ENCODE measurements at regions of chr22 and their contacts with region 1.

Region 1: DNA sequence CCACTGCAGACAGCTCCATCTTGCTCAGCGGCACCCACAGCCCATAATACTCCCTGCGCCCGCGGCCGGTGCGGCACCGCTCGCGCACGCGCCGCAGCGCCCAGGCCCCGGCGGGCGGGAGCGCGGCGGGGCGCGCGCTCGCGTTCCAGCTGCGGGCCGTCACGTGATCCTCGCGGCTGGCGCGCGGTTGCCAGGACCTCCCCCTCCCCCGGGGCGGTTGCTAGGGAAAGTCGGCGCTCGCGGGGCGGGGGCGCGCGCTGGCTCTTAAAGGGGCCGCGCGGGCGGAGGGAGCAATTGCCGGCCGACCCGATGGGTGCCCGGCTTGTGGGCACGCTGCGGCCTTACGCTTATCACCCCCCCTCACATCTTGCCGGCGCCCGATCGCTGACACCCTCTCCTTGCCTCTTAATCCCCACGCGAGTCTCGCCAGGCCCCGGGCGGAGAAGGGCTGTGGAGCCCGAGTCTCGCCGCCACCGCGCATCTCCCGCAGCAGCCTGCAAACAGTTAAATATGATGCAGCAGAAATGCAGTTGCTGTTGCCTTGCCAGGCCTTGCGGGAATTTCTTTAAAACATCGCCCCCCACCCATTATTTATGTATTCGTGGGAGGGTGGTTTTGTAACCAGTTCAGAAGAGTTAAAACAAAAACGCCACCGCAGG is at the start of gene CBX6:
- DNase-seq: peak; percentile 73 to 97
- H3K4me3 ChIP-seq: peak within 1 kb of the TSS; percentile 83
- H3K27ac ChIP-seq: peak within 1 kb of the TSS; percentile 62
- H3K4me1 ChIP-seq: peaks cover 28% of the 10 kb centered on the region
- H3K27me3 ChIP-seq: no peaks in the 10 kb centered on the region
- CTCF ChIP-seq: no peak
- total RNA-seq, gene CBX6: 131 and 136 TPM in 2 replicates

Region 2: DNA sequence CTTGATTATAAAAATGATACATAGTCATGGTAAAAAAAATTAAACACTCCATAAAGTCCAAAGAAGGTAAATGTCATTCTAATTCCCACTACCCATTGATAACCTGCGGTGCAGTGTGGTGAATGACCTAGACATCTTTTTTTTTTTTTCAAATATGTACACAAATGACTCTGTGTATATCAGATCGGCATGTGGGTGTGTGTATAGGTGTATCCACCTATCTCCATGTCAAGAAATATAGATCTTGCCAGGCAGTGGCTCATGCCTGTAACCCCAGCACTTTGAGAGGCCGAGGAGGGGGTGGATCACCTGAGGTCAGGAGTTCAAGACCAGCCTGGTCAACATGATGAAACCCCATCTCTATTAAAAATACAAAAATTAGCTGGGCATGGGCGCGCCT is 18.1 kb after region 1 on chr22:
- CTCF ChIA-PET with region 1: no interaction called
- POLR2A ChIA-PET with region 1: no interaction called
- intact Hi-C with region 1: no loop called
- DNase-seq: peak in 1 of 2 experiments; percentile 80
- H3K4me3 ChIP-seq: no peak overlapping the region
- H3K27ac ChIP-seq: no peak overlapping the region
- H3K4me1 ChIP-seq: no peaks in the 10 kb centered on the region
- H3K27me3 ChIP-seq: no peaks in the 10 kb centered on the region
- CTCF ChIP-seq: no peak

Region 3: GRCh38 chr22:38927033-38927781 is 54.9 kb after region 1 on chr22:
- CTCF ChIA-PET with region 1: interaction called, 11 read pairs
- POLR2A ChIA-PET with region 1: interaction called, 5 read pairs
- intact Hi-C with region 1: loop called (anchors 1 kb)
- DNase-seq: peak in 1 of 2 experiments; percentile 89
- H3K4me3 ChIP-seq: no peak overlapping the region
- H3K27ac ChIP-seq: no peak overlapping the region
- H3K4me1 ChIP-seq: peaks cover 39% of the 10 kb centered on the region
- H3K27me3 ChIP-seq: no peaks in the 10 kb centered on the region
- CTCF ChIP-seq: peak; percentile 50

Region 4: GRCh38 chr22:38973289-38974169 is 101.2 kb after region 1 on chr22:
- CTCF ChIA-PET with region 1: no interaction called
- POLR2A ChIA-PET with region 1: no interaction called
- intact Hi-C with region 1: no loop called
- DNase-seq: peak in 1 of 2 experiments; percentile 42
- H3K4me3 ChIP-seq: no peak overlapping the region
- H3K27ac ChIP-seq: no peak overlapping the region
- H3K4me1 ChIP-seq: no peaks in the 10 kb centered on the region
- H3K27me3 ChIP-seq: no peaks in the 10 kb centered on the region
- CTCF ChIP-seq: peak; percentile 99

Region 5: DNA sequence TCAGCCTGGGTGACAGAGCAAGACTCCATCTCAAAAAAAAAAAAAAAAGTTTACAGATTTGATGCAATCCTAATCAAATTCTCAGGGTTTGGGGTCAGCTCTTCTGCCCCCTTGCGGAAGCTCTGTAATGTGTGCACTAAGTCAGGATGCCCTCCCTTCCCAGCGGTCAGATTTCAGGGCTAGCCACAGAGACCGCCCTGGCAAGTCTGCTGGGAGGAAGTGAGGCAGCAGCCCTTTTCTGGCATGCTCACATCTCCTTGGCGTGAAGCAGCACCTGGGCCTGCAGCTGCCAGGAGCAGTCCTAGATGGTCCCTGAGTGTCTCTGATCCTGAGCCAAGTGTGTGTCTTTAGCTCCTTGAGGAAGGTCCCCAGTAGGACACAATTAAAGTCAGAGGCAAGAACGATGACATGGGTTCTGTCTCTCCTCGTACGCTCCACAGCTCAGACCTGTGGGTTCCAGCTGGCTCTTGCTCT is 130.9 kb after region 1 on chr22:
- CTCF ChIA-PET with region 1: interaction called, 19 read pairs
- POLR2A ChIA-PET with region 1: interaction called, 9 read pairs
- intact Hi-C with region 1: loop called (anchors 1 kb)
- DNase-seq: peak; percentile 89 to 94
- H3K4me3 ChIP-seq: no peak overlapping the region
- H3K27ac ChIP-seq: peak overlapping the region; percentile 20; the same call in 1 of the 2 replicates
- H3K4me1 ChIP-seq: peaks cover 11% of the 10 kb centered on the region
- H3K27me3 ChIP-seq: no peaks in the 10 kb centered on the region
- CTCF ChIP-seq: peak; percentile 95

Region 6: DNA sequence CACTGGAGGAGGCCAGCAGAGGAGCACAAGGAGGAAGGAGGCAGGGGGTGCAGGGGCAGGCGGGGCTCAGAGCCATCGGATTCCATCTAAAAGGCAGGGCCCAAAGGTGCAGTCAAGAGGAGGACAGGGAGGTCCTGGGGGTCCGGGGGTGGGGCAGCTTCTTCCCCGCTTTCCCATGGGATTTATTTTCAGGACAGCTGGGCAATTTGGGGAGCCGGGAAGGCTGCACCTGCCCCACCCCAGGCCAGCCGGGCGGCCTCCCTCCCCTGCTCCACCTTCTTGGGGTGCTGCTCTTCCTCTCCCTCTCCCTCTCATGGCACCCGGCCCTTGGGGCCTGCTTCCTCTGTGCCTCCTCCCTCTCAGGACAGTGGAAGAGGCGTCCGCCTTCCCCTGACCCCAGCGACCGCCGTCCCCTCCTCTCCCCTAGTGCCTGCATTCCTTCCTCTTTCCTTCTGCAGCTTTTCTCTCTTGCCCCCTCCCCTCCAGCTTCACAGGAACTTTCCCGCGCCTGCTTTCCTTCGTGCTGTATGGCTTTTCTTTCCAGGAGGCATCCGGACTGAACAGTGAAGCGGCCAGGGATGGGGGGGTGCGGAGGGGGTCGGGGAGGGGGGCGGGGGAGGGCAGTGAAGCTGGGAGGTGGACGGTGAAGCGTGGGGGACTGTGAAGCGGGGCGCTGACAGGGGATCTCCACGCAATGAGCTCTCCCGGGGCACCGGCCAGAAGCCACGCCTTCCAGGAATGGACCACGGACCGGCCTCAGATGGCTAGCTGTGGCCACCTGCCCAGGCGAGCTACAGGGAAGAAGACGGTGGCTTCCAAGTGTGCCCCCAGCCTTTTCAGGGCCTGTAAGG is 251.7 kb after region 1 on chr22:
- CTCF ChIA-PET with region 1: no interaction called
- POLR2A ChIA-PET with region 1: interaction called, 4 read pairs
- intact Hi-C with region 1: loop called (anchors 1 kb)
- DNase-seq: no peak
- H3K4me3 ChIP-seq: no peak overlapping the region
- H3K27ac ChIP-seq: no peak overlapping the region
- H3K4me1 ChIP-seq: peaks cover 9% of the 10 kb centered on the region; the same call in 1 of the 2 replicates
- H3K27me3 ChIP-seq: no peaks in the 10 kb centered on the region
- CTCF ChIP-seq: no peak

Region 7: DNA sequence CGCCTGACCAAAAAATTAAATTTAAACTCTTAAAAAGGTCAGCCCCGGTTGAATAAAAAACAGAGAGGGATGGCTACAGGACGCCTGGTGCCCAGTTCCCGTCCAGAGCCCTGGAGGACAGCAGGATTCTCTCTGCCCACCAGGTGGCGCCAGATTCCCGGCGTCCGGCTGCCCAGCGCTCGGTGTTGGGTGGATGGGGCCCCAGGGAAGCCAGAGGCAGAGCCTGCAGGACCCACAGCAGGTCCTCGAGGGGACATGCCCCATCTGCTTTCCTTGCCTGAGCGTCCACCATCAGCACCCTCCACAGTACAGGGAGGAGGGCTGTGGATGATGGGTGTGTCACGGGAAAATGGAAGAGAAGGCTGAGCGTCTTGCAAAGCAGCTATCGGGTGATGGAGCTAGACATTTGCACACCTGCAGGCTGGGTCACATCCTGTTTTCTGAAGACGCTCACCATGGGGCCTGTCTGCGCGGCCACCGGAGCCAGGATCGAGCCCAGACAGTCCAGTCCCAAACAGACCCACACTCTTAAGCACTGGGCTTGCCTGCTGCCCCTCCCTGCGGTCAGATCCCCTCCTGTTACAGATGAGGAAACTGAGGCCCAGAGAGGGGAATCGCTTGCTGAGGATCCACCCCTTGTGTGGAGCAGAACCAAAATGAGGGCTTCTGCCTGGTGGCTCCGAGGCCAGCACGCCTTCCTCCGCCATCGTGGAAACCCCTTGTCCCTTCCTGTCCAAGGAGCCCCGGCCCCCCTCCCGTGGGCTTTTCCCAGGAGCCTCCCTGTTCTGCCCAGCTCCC is 298.7 kb after region 1 on chr22:
- CTCF ChIA-PET with region 1: no interaction called
- POLR2A ChIA-PET with region 1: no interaction called
- intact Hi-C with region 1: no loop called
- DNase-seq: peak; percentile 53 to 91
- H3K4me3 ChIP-seq: no peak overlapping the region
- H3K27ac ChIP-seq: no peak overlapping the region
- H3K4me1 ChIP-seq: peaks cover 50% of the 10 kb centered on the region
- H3K27me3 ChIP-seq: no peaks in the 10 kb centered on the region
- CTCF ChIP-seq: peak; percentile 100

Region 8: GRCh38 chr22:39532215-39533071 is 660.1 kb after region 1 on chr22 and contains the start of gene RPS19BP1:
- CTCF ChIA-PET with region 1: no interaction called
- POLR2A ChIA-PET with region 1: no interaction called
- intact Hi-C with region 1: loop called (anchors 1 kb)
- DNase-seq: peak; percentile 100
- H3K4me3 ChIP-seq: peak within 1 kb of the TSS; percentile 87
- H3K27ac ChIP-seq: peak within 1 kb of the TSS; percentile 30
- H3K4me1 ChIP-seq: peaks cover 44% of the 10 kb centered on the region
- H3K27me3 ChIP-seq: no peaks in the 10 kb centered on the region
- CTCF ChIP-seq: peak; percentile 24; the same call in 1 of the 2 replicates
- total RNA-seq, gene RPS19BP1: 60.7 and 94.3 TPM in 2 replicates

Measured in PC-9 (cell line).